Ovary (tissue), 10 donors: ENCODE measurements at regions of chr18 and their contacts with region 1.

Region 1: GRCh38 chr18:22207021-22207758 is 37.8 kb downstream of the GATA6 start:
- DNase-seq: peak; percentile 57 to 77 (median 69)
- H3K4me3 ChIP-seq: no peak overlapping the region
- H3K27ac ChIP-seq: peak overlapping the region in 1 of 2 donors; percentile 70
- H3K4me1 ChIP-seq: peaks cover 18% of the 10 kb centered on the region
- H3K27me3 ChIP-seq: no peaks in the 10 kb centered on the region
- CTCF ChIP-seq: no peak
- EP300 ChIP-seq: no peak
- POLR2A ChIP-seq: no peak

Region 2: GRCh38 chr18:22176420-22177326 is 30.5 kb before region 1 on chr18:
- intact Hi-C with region 1: no loop called
- DNase-seq: peak in 4 of 5 donors; percentile 54 to 66 (median 56)
- H3K4me3 ChIP-seq: peak overlapping the region; percentile 51
- H3K27ac ChIP-seq: peak overlapping the region; percentile 77 to 80
- H3K4me1 ChIP-seq: peaks cover 9% of the 10 kb centered on the region
- H3K27me3 ChIP-seq: no peaks in the 10 kb centered on the region
- CTCF ChIP-seq: no peak
- EP300 ChIP-seq: no peak
- POLR2A ChIP-seq: no peak

Region 3: DNA sequence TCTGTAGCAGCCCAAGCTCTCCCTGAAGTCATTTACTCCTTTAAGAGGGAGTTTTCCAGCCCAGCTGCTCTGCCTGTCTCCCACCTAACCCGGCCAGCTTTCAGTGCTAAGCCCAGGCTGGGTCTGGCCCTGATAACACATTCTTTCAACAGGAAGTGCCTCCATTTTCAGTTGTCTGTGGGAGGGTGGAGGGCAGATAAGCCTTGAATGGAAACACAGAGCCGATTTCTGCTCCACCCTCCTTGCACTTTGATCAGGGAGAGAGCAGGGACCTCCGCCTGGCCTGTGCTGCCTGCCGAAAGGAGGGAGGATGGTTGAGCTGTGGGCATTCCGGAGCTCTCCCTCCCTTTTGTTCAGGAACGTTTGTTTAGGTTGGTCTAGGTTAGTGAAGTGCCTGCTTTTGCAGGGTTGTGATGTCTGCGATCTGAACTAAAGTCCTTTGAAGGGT is 13.0 kb before region 1 on chr18:
- intact Hi-C with region 1: loop called in 1 of 4 experiments (anchors 2 kb)
- DNase-seq: peak in 3 of 5 donors; percentile 52 to 65 (median 59)
- H3K4me3 ChIP-seq: peak overlapping the region; percentile 10
- H3K27ac ChIP-seq: peak overlapping the region; percentile 22 to 70
- H3K4me1 ChIP-seq: peaks cover 14% of the 10 kb centered on the region
- H3K27me3 ChIP-seq: no peaks in the 10 kb centered on the region
- CTCF ChIP-seq: no peak
- EP300 ChIP-seq: no peak
- POLR2A ChIP-seq: no peak

Region 4: DNA sequence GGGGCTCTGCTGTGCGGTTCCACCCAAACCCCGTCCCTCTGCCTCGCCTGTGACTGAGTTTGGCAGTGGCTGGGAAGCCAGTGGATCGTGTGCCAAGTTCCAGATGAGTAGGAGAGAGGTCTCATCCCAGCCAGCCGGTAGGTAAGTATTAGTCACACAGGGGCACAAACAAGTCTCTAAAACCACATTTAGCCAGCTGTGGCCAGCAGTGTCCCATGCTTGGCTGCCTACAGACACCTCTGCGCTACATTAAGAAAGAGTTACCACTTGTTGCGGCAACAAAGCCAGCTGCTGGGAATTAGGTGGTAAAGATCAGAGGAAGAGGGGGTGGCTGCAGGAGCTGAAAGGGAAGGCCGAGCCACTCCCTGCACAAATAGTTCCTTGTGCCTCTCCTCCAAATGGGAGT is 43.4 kb after region 1 on chr18:
- intact Hi-C with region 1: no loop called
- DNase-seq: no peak
- H3K4me3 ChIP-seq: no peak overlapping the region
- H3K27ac ChIP-seq: no peak overlapping the region
- H3K4me1 ChIP-seq: no peaks in the 10 kb centered on the region
- H3K27me3 ChIP-seq: no peaks in the 10 kb centered on the region
- CTCF ChIP-seq: no peak
- EP300 ChIP-seq: no peak
- POLR2A ChIP-seq: no peak

Region 5: GRCh38 chr18:22285361-22286140 is 78.4 kb after region 1 on chr18:
- intact Hi-C with region 1: loop called in 1 of 4 experiments (anchors 2 kb)
- DNase-seq: no peak
- H3K4me3 ChIP-seq: no peak overlapping the region
- H3K27ac ChIP-seq: no peak overlapping the region
- H3K4me1 ChIP-seq: peaks cover 3% of the 10 kb centered on the region
- H3K27me3 ChIP-seq: no peaks in the 10 kb centered on the region
- CTCF ChIP-seq: no peak
- EP300 ChIP-seq: no peak
- POLR2A ChIP-seq: no peak

Region 6: DNA sequence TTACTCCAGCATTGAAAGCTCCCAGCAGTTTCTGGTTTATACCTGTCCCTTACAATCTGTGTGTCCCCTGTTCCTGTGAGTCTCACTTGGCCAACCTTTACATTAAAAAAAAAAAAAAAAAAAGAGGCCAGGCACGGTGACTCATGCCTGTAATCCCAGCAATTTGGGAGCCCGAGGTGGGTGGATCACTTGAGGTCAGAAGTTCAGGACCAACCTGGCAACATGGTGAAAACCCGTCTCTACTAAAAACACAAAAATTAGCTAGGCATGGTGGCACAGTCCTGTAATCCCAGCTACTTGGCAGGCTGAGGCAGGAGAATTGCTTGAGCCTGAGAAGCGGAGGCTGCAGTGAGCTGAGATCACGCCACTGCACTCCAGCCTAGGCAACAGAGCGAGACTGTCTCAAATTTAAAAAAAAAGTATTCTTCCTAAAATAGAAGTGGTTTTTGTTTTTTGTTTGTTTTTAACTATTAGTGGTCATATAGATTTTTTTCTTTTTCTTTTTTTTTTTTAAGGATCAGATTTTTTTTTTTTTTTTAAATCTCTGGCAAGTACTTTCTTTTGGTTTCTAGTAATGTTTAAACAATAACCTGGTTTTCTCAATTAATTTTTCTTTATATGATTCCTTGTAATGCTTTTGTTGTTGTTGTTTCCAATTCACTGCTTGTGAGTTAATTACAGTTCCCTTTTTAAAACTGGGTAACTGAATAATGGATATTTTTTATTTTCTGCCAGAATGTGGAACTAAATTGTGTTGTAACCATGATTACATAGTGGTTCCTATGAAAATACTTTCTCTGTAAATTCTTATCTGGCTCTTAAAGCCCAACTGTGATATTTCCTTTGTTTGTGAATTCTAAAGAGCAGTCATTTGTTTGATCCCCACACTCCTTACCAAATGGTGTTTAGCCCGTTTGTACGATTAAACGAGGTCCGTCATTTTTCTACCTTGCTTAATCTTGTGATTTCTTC is 93.8 kb after region 1 on chr18:
- intact Hi-C with region 1: no loop called
- DNase-seq: no peak
- H3K4me3 ChIP-seq: no peak overlapping the region
- H3K27ac ChIP-seq: no peak overlapping the region
- H3K4me1 ChIP-seq: peaks cover 6% of the 10 kb centered on the region
- H3K27me3 ChIP-seq: no peaks in the 10 kb centered on the region
- CTCF ChIP-seq: no peak
- EP300 ChIP-seq: no peak
- POLR2A ChIP-seq: no peak